ENCODE measurements at regions of chr2 and their contacts with region 1.

Region 1: DNA sequence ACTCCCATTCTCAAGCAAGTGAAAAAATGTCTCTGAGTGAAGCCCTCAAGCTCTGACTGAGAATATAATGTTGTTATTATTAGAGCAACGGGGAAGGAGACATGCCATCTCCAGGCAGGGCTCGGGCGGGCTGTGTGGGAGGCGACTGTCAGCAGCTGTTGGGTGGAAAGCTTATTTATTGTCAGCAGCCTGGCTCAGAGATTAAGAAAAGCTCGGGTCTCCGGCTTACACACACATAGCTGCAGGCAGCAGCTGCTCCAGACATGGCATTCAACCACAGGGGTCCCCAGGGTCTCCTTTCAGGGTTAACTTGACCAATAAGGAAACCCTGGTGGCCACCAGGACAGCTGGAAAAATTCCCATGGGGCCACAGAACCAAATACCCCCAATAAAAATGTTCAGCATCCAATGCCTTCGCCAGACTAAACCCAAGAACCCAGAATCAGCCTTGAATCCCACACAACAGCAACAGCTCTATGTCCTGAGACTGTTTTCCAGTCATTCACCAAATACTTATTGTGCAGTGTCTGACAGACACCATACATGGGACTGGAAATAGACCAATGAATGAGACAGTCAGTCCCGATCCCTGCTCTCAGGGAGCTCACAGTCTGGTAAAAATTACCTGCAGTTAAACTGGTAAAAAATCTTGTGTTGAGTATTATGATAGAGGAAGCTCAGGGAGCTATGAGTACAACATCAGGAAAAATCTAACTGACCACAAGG is 70.5 kb upstream of the RTN4 start:
- DNase-seq: no peak
- CTCF ChIP-seq: no peak

Region 2: DNA sequence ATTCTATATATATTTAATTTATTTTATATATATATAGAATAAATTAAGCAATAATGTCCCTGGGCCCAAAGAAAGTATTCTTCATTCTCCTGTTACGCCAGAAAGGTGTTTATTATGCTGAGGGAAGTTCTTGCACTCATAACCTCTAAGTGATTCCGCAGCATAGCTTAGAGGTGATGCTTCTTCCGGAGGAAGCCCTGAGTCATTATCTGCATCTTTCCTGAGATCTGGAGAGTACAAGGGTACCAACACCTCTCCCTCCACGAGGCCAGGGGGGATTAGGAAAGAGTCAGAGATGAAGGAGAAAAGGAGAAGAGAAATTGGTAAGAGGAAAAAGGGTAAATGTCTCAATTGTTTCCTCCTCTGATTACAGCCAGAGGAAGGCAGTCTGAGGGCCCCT is 27.4 kb before region 1 on chr2:
- CTCF ChIA-PET with region 1: no interaction called
- POLR2A ChIA-PET with region 1: no interaction called
- DNase-seq: no peak
- CTCF ChIP-seq: no peak

Region 3: GRCh38 chr2:55133467-55134315 is 12.9 kb after region 1 on chr2:
- CTCF ChIA-PET with region 1: interaction called, 25 read pairs
- POLR2A ChIA-PET with region 1: no interaction called
- DNase-seq: peak; percentile 66
- CTCF ChIP-seq: no peak

Region 4: GRCh38 chr2:55338268-55338667 is 217.5 kb after region 1 on chr2:
- CTCF ChIA-PET with region 1: no interaction called
- POLR2A ChIA-PET with region 1: no interaction called
- DNase-seq: no peak
- CTCF ChIP-seq: no peak

Measured in GM10248 (cell line).